IMR-90 (cell line): ENCODE measurements at regions of chr9 and their contacts with region 1.

Region 1: GRCh38 chr9:137406876-137407589 is 15.9 kb downstream of the EXD3 start:
- DNase-seq: peak; percentile 44
- ATAC-seq: peak; percentile 94
- H3K4me3 ChIP-seq: peak overlapping the region; percentile 31
- H3K27ac ChIP-seq: no peak overlapping the region
- H3K4me1 ChIP-seq: peaks cover 20% of the 10 kb centered on the region
- H3K27me3 ChIP-seq: no peaks in the 10 kb centered on the region
- CTCF ChIP-seq: peak; percentile 84
- POLR2A ChIP-seq: no peak
- RAD21 ChIP-seq: peak; percentile 83

Region 2: DNA sequence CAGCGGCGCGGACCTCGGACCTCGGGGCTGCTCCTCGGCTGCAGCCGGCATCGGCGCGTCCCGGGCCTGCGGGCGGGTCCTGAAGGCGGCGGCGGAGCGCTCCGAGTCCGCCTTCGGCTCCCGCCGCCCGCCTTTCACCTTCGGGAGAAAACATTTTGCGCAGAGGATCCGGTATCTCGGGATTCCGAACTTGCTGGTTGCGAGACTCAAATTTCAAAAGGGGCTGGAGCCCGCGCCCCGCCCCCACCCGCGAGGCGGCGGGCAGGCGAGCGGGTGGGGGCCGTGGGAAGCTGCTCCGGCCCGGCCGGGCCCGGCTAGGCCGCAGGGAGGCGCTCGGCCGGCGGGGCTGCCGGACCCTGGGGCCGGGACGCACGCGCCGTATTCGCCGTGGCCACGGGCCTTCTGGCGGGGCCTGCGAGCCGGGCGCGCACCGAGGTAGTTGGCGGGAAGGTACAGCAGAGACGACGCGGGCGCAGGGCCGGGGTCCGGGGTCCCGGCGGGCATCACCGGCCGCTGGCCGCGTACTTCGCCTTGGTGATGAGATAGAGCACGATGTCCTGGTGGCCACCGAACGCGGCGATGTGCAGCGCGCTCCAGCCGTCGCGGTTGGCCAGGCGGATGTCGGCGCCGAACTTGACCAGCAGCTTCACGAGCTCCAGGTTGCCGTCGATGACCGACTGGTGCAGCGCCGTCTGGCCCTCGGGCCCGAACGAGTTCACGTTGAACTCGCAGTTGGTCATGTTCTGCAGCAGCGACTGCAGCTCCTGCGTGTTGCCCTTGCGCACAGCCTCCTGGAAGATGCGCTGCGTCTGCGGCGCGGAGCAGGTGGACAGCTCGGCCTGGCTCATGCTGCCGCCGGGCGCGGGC is 105.7 kb before region 1 on chr9:
- CTCF ChIA-PET with region 1: no interaction called
- POLR2A ChIA-PET with region 1: no interaction called
- dilution Hi-C with region 1: no loop called
- in situ Hi-C with region 1: no loop called
- intact Hi-C with region 1: loop called (anchors 2 kb)
- DNase-seq: peak; percentile 39
- ATAC-seq: peak; percentile 30
- H3K4me3 ChIP-seq: peak overlapping the region; percentile 56
- H3K27ac ChIP-seq: no peak overlapping the region
- H3K4me1 ChIP-seq: peaks cover 3% of the 10 kb centered on the region
- H3K27me3 ChIP-seq: peaks cover 31% of the 10 kb centered on the region
- CTCF ChIP-seq: peak; percentile 45
- POLR2A ChIP-seq: no peak
- RAD21 ChIP-seq: peak; percentile 28; the same call in 1 of the 2 replicates